ENCODE measurements at regions of chr12 and their contacts with region 1.

Region 1: GRCh38 chr12:54279866-54280467 is at the start of gene CBX5:
- DNase-seq: peak; percentile 100
- H3K4me3 Mint-ChIP-seq: no peak within 1 kb of the TSS
- H3K27ac Mint-ChIP-seq: no peak within 1 kb of the TSS
- H3K4me1 Mint-ChIP-seq: peaks cover 61% of the 10 kb centered on the region
- H3K27me3 Mint-ChIP-seq: no peaks in the 10 kb centered on the region
- total RNA-seq, gene CBX5: 103 to 106 TPM

Region 2: GRCh38 chr12:53887006-53887405 is 393.0 kb before region 1 on chr12:
- CTCF ChIA-PET with region 1: no interaction called
- POLR2A ChIA-PET with region 1: no interaction called
- DNase-seq: no peak
- H3K4me3 Mint-ChIP-seq: no peak overlapping the region
- H3K27ac Mint-ChIP-seq: no peak overlapping the region
- H3K4me1 Mint-ChIP-seq: no peaks in the 10 kb centered on the region
- H3K27me3 Mint-ChIP-seq: peaks cover 43% of the 10 kb centered on the region

Region 3: GRCh38 chr12:54053751-54054741 is 225.9 kb before region 1 on chr12 and contains the start of gene HOXC4:
- CTCF ChIA-PET with region 1: no interaction called
- POLR2A ChIA-PET with region 1: no interaction called
- DNase-seq: no peak
- H3K4me3 Mint-ChIP-seq: peak within 1 kb of the TSS; percentile 56
- H3K27ac Mint-ChIP-seq: no peak within 1 kb of the TSS
- H3K4me1 Mint-ChIP-seq: peaks cover 21% of the 10 kb centered on the region
- H3K27me3 Mint-ChIP-seq: peaks cover 91% of the 10 kb centered on the region
- total RNA-seq, gene HOXC4: 0.15 to 0.23 TPM

Region 4: DNA sequence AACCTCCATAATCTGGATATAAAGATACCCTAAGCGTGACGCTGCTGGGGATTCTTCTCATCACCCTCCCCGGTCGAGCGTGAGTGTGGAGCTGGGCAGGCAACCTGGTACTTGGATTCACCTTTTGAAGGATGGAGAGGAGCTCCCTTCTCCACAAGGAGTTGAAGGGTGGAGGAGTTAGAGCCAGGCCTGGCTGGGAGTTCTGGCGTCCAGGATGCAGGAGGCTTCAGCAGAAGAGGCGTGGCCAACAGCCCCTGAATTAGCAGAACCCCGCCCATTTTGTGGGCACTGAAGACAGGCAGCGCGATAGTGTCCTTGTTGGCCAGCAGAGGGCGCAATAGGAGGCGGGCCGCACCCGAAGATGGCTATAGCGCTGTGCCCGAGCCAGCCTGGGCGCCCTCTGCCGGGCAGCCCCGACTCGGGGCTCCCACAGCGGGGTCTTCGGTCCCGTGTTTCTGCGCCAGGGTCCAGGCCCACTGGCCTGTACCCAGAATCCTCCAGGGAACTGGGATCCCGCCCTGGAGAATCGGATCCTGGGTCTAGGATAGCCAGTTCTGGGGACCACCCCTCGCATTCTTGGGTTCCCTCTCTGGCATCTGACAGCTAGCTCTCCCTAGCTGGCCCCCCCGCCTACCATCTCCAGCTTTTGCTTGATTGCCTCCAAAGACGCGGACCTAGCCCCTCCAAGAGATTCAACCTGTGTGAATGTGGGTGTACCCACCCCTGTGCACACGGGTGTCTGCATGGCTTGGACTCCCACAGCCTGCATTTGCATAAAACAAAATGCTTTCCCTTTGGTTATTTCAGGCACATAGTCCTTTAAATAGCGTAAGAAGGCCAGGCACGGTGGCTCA is 65.2 kb before region 1 on chr12:
- CTCF ChIA-PET with region 1: interaction called, 13 read pairs
- POLR2A ChIA-PET with region 1: interaction called, 24 read pairs
- DNase-seq: peak; percentile 93
- H3K4me3 Mint-ChIP-seq: peak overlapping the region; percentile 85
- H3K27ac Mint-ChIP-seq: peak overlapping the region; percentile 68
- H3K4me1 Mint-ChIP-seq: peaks cover 47% of the 10 kb centered on the region
- H3K27me3 Mint-ChIP-seq: peaks cover 22% of the 10 kb centered on the region

Region 5: DNA sequence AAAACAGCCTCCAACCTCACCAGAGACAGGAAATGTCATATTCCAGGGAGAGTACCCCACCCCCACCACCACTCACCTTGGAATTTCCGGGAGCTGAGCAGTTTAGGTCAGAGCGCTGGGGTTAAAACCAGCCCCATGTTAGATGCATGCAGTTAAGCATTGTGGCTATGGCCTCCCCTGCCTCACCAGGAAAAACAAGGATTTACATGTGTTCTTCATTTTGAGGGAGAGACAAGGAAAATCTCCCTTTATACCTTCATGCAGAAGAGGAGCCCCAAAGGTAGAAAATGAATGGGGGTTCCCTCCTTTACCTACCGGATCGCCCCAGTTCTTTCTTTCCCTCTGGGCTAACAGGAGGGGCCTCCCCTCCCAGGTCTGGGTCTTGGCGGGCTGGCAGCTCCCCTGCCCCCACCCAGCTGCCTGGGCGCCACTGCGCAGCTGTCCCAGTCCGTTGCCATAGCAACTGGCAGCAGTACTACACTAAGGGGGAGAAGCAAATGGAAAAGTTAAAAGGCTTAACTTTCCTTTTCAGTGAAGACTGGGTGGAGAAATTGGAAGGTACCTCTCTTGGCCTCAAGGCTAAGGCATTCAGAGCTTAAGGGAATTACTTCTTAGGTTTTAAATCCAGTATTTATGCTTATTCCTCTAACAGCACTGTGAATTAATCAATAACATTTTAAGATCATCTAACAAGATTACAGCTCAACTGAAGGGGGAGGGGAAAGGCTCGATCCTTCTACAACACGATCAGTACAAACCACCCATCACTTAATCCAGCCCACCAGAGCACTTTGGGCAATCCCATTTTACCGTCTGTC is 20.6 kb before region 1 on chr12:
- CTCF ChIA-PET with region 1: no interaction called
- POLR2A ChIA-PET with region 1: interaction called, 33 read pairs
- DNase-seq: no peak
- H3K4me3 Mint-ChIP-seq: no peak overlapping the region
- H3K27ac Mint-ChIP-seq: no peak overlapping the region
- H3K4me1 Mint-ChIP-seq: peaks cover 24% of the 10 kb centered on the region
- H3K27me3 Mint-ChIP-seq: no peaks in the 10 kb centered on the region

Region 6: GRCh38 chr12:54324617-54325441 is 44.9 kb after region 1 on chr12 and contains the start of gene COPZ1:
- CTCF ChIA-PET with region 1: interaction called, 34 read pairs
- POLR2A ChIA-PET with region 1: interaction called, 28 read pairs
- DNase-seq: peak; percentile 96
- H3K4me3 Mint-ChIP-seq: peak within 1 kb of the TSS; percentile 92
- H3K27ac Mint-ChIP-seq: peak within 1 kb of the TSS; percentile 91
- H3K4me1 Mint-ChIP-seq: peaks cover 45% of the 10 kb centered on the region
- H3K27me3 Mint-ChIP-seq: no peaks in the 10 kb centered on the region
- total RNA-seq, gene COPZ1: 126 to 130 TPM

Region 7: GRCh38 chr12:54359033-54359761 is 79.2 kb after region 1 on chr12:
- CTCF ChIA-PET with region 1: interaction called, 13 read pairs
- POLR2A ChIA-PET with region 1: interaction called, 63 read pairs
- DNase-seq: peak; percentile 97
- H3K4me3 Mint-ChIP-seq: no peak overlapping the region
- H3K27ac Mint-ChIP-seq: no peak overlapping the region
- H3K4me1 Mint-ChIP-seq: peaks cover 23% of the 10 kb centered on the region
- H3K27me3 Mint-ChIP-seq: no peaks in the 10 kb centered on the region

Region 8: GRCh38 chr12:54497883-54498282 is 217.9 kb after region 1 on chr12:
- CTCF ChIA-PET with region 1: no interaction called
- POLR2A ChIA-PET with region 1: interaction called, 10 read pairs
- DNase-seq: no peak
- H3K4me3 Mint-ChIP-seq: peak overlapping the region; percentile 99
- H3K27ac Mint-ChIP-seq: peak overlapping the region; percentile 95
- H3K4me1 Mint-ChIP-seq: peaks cover 45% of the 10 kb centered on the region
- H3K27me3 Mint-ChIP-seq: no peaks in the 10 kb centered on the region

Region 9: DNA sequence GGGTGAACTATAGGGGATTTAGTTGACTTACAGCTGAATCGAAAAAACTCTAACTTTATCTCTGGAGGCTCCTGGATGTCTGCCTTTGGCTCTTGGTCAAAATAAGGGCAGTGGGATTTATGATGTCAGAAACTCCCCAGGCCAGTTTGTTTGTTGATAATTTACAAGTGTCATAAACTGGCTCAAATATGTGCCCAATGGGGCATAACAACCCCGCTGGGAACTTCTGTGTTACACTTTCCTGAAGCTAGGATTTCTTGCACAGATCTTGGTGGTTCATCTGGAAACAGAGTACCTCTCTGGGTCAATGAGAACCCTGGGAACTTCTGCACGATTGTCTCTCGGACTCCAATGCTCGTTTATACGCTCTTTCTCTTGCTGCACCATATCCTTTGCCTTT is 515.7 kb after region 1 on chr12:
- CTCF ChIA-PET with region 1: no interaction called
- POLR2A ChIA-PET with region 1: no interaction called
- DNase-seq: no peak
- H3K4me3 Mint-ChIP-seq: no peak overlapping the region
- H3K27ac Mint-ChIP-seq: no peak overlapping the region
- H3K4me1 Mint-ChIP-seq: no peaks in the 10 kb centered on the region
- H3K27me3 Mint-ChIP-seq: peaks cover 3% of the 10 kb centered on the region